CD8-positive, alpha-beta T cell (primary cell): ENCODE measurements at regions of chr20 and their contacts with region 1.

Region 1: DNA sequence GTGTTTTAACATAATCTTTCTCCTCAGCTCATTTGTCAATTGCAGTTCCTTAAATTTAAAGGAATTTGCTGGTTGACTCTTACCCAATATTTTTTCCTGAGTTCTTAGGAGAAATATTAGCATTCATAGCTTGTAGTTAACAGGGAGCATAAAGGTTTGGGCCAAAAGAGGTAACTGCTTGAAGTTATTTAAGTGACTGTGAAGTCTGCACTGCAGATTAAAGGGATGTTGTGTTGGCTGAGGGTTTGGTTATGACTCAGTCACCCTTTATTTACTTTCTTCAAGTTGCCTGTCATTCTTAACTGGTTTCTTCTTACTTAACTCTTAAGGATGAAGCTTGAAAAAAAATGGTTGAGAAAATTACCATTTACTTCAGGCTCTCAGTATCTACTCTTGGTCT is 220.3 kb upstream of the LAMP5 start:
- DNase-seq: no peak
- ATAC-seq: no peak
- H3K4me3 ChIP-seq: no peak overlapping the region
- H3K4me3 Mint-ChIP-seq: no peak overlapping the region
- H3K27ac ChIP-seq: no peak overlapping the region
- H3K27ac Mint-ChIP-seq: no peak overlapping the region
- H3K4me1 ChIP-seq: no peaks in the 10 kb centered on the region
- H3K4me1 Mint-ChIP-seq: no peaks in the 10 kb centered on the region
- H3K27me3 ChIP-seq: no peaks in the 10 kb centered on the region
- H3K27me3 Mint-ChIP-seq: no peaks in the 10 kb centered on the region
- CTCF ChIP-seq: no peak

Region 2: DNA sequence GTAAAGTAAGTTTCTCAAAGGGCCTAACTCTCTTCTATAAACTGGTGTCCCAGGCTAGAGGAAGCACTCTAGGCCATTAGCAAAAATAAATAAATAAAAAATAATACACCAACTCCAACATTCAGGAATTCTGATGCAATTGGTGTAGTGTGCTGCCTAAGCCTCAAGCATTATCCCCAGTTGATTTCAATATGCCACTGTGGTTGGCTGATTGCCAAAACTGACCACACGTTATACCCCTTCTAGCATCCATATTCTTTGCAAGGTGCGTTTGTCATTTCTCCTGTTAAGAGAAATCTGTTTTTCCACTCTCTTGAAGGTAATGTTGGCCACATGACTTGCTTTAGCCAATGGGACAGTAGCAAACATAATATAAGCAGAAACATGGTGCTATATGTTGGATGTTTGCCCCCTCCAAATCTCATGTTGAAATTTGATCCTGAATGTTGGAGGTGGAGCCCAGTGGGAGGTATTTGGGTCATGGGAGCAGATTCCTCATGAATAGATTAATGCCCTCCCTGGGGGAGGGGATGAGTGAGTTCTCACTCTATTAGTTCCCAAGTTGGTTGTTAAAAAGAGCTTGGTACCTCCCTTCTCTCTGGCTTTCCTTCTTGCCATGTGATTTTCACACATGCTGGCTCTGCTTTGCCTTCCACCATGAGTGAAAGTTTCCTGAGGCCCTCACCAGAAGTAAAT is 297.1 kb before region 1 on chr20:
- CTCF ChIA-PET with region 1: no interaction called
- POLR2A ChIA-PET with region 1: no interaction called
- intact Hi-C with region 1: no loop called
- DNase-seq: no peak
- ATAC-seq: no peak
- H3K4me3 ChIP-seq: no peak overlapping the region
- H3K4me3 Mint-ChIP-seq: no peak overlapping the region
- H3K27ac ChIP-seq: no peak overlapping the region
- H3K27ac Mint-ChIP-seq: no peak overlapping the region
- H3K4me1 ChIP-seq: no peaks in the 10 kb centered on the region
- H3K4me1 Mint-ChIP-seq: no peaks in the 10 kb centered on the region
- H3K27me3 ChIP-seq: no peaks in the 10 kb centered on the region
- H3K27me3 Mint-ChIP-seq: no peaks in the 10 kb centered on the region
- CTCF ChIP-seq: no peak

Region 3: DNA sequence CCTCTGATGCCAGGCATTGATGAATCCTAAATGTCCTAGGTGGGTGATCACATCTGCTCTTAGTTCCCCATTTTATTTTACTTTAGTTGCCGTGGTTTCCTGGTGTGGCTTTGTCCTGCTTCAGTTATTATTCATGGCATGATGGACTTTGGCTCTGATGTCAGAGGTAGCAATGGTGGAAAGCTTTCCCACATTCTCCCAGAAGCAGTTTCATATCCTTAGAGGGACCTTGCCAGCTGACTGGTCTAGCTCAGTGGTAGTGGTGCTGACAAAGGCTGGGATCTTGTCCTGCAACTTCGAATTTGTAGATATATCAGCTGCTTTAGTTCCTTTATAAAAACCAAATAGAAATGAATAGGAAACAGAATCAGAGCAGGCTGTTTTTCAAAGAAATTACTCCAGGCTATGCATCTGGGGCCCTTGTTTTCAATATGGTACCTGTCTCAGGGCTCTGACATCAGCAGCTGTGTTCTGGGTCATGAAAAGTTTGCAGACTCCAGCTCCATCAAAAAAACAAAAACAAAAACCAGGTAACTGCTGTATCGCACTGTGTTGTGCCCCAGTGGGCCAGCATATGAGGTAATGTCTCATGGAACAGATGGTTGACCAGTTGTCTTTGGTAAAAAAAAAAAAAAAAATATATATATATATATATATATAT is 91.5 kb before region 1 on chr20:
- CTCF ChIA-PET with region 1: no interaction called
- POLR2A ChIA-PET with region 1: no interaction called
- intact Hi-C with region 1: no loop called
- DNase-seq: no peak
- ATAC-seq: no peak
- H3K4me3 ChIP-seq: no peak overlapping the region
- H3K4me3 Mint-ChIP-seq: no peak overlapping the region
- H3K27ac ChIP-seq: no peak overlapping the region
- H3K27ac Mint-ChIP-seq: no peak overlapping the region
- H3K4me1 ChIP-seq: no peaks in the 10 kb centered on the region
- H3K4me1 Mint-ChIP-seq: no peaks in the 10 kb centered on the region
- H3K27me3 ChIP-seq: no peaks in the 10 kb centered on the region
- H3K27me3 Mint-ChIP-seq: no peaks in the 10 kb centered on the region
- CTCF ChIP-seq: no peak

Region 4: GRCh38 chr20:9235518-9235917 is 58.5 kb before region 1 on chr20:
- CTCF ChIA-PET with region 1: no interaction called
- POLR2A ChIA-PET with region 1: no interaction called
- intact Hi-C with region 1: loop called in 1 of 2 experiments (anchors 10 kb)
- DNase-seq: no peak
- ATAC-seq: no peak
- H3K4me3 ChIP-seq: no peak overlapping the region
- H3K4me3 Mint-ChIP-seq: no peak overlapping the region
- H3K27ac ChIP-seq: no peak overlapping the region
- H3K27ac Mint-ChIP-seq: no peak overlapping the region
- H3K4me1 ChIP-seq: no peaks in the 10 kb centered on the region
- H3K4me1 Mint-ChIP-seq: no peaks in the 10 kb centered on the region
- H3K27me3 ChIP-seq: no peaks in the 10 kb centered on the region
- H3K27me3 Mint-ChIP-seq: no peaks in the 10 kb centered on the region
- CTCF ChIP-seq: no peak

Region 5: GRCh38 chr20:9442858-9443257 is 148.8 kb after region 1 on chr20:
- CTCF ChIA-PET with region 1: no interaction called
- POLR2A ChIA-PET with region 1: no interaction called
- intact Hi-C with region 1: no loop called
- DNase-seq: no peak
- ATAC-seq: no peak
- H3K4me3 ChIP-seq: no peak overlapping the region
- H3K4me3 Mint-ChIP-seq: no peak overlapping the region
- H3K27ac ChIP-seq: no peak overlapping the region
- H3K27ac Mint-ChIP-seq: no peak overlapping the region
- H3K4me1 ChIP-seq: no peaks in the 10 kb centered on the region
- H3K4me1 Mint-ChIP-seq: no peaks in the 10 kb centered on the region
- H3K27me3 ChIP-seq: no peaks in the 10 kb centered on the region
- H3K27me3 Mint-ChIP-seq: no peaks in the 10 kb centered on the region
- CTCF ChIP-seq: no peak